ENCODE measurements at regions of chr12 and their contacts with region 1.

Region 1: DNA sequence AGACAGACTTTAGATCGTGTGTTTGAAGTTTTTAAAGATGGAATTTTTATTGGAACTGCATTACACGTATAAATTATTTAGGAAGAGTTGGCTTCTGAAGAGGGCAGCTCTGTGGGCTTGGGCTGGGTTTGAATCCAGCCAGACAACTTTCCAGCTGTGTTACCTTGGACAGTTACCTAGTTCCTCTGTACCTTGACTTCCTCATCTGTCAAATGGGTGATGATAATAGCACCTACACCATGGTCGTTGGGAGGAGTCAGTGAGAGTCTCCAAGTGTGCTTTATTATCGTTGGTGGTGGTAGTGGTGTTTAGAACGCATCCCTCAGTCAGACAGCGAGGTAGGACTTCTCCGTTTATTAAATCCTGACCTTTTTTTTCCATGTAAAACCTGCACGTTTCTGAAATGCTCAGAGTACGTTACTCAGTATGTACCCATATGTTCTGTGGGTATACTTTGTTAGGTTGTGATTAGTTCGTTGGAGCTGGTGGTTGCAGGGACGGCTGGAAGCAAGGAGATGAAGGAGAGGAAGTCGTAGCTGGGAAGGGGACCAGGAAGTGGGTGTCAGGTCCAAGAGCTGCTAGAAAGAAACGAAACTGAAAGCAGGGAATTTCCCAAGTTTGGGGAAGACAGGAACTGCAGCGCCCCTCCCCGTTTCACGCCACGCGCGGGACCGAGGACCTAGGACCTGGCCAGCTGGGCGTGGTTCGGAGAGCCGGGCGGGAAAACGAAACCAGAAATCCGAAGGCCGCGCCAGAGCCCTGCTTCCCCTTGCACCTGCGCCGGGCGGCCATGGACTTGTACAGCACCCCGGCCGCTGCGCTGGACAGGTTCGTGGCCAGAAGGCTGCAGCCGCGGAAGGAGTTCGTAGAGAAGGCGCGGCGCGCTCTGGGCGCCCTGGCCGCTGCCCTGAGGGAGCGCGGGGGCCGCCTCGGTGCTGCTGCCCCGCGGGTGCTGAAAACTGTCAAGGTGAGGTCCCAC is at the start of gene OAS3:
- ATAC-seq: peak; percentile 44 to 95 (median 68)
- H3K4me3 ChIP-seq: peak within 1 kb of the TSS; percentile 23 to 38 (median 31)
- H3K27ac ChIP-seq: no peak within 1 kb of the TSS
- H3K4me1 ChIP-seq: no peaks in the 10 kb centered on the region
- total RNA-seq, gene OAS3: 0.05 to 20.9 (median 2.7) TPM

Region 2: DNA sequence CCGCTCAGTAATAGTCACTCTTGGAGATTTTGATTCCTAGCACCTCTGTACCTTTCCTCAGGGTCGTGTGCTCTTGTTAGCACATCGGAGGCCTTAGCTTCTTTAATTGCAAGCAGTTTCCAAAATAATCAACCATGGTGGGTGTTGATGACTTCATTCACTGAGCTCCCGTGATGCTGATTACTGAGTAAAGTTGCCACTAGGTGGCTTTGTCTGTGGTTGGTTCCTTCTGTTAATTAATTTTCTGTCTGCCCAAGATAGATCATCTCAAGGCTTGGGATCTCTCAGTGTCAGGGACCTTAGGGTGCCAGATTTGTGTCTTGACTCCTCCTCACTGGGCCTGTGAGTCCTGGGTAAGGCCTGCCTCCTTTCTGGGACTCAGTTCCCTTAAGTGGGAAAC is 465.0 kb before region 1 on chr12:
- in situ Hi-C with region 1: loop called in 1 of 9 experiments (anchors 25 kb)
- ATAC-seq: peak in 1 of 8 experiments; percentile 10
- H3K4me3 ChIP-seq: no peak overlapping the region
- H3K27ac ChIP-seq: no peak overlapping the region
- H3K4me1 ChIP-seq: no peaks in the 10 kb centered on the region

Measured in motor neuron (in vitro differentiated cells).